ENCODE measurements at regions of chr4 and their contacts with region 1.

Region 1: DNA sequence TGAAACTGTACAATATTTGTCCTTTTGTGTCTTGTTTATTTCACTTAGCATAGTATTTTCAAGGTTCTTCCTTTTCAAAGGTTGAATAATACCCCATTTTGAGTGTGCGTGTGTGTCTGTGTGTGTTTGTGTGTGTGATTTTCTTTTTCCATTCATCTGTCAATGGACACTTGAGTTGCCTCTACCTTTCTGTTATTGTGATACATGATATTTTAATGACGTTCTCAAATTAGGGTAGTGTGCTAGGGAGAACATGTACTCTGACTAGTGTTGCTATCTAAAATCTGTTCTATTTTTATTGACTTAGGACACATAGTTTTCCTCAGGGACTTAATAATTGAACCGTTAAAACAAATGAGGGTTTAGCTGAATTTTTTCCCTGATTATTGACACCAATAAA is 9.9 kb downstream of the MMRN1 start:
- DNase-seq: no peak
- ATAC-seq: no peak
- H3K4me3 ChIP-seq: no peak overlapping the region
- H3K27ac ChIP-seq: no peak overlapping the region
- H3K4me1 ChIP-seq: no peaks in the 10 kb centered on the region
- H3K27me3 ChIP-seq: no peaks in the 10 kb centered on the region

Region 2: GRCh38 chr4:89226665-89227574 is 677.6 kb before region 1 on chr4:
- intact Hi-C with region 1: loop called (anchors 5 kb)
- DNase-seq: peak; percentile 78 to 84
- ATAC-seq: peak; percentile 82
- H3K4me3 ChIP-seq: no peak overlapping the region
- H3K27ac ChIP-seq: no peak overlapping the region
- H3K4me1 ChIP-seq: no peaks in the 10 kb centered on the region
- H3K27me3 ChIP-seq: no peaks in the 10 kb centered on the region

Region 3: DNA sequence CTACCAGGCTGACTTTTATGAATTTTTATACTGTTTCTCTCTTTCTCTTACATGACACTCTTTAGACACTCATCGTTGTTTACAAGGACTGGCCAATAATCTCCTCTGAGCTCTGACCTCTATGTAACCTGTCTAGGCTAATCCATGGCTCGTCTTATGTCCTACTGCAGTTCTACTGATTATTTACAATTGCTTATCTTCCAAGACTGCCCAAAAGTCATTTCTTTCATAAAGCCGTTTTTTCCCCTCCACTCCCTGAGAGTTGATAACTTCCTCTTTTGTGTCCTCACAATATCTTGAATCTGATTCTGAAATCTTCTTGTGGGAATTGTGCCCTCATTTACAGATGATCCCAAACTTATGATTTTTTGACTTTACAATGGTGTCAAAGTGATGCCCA is 49.3 kb before region 1 on chr4:
- intact Hi-C with region 1: no loop called
- DNase-seq: no peak
- ATAC-seq: no peak
- H3K4me3 ChIP-seq: no peak overlapping the region
- H3K27ac ChIP-seq: no peak overlapping the region
- H3K4me1 ChIP-seq: no peaks in the 10 kb centered on the region
- H3K27me3 ChIP-seq: no peaks in the 10 kb centered on the region

Region 4: DNA sequence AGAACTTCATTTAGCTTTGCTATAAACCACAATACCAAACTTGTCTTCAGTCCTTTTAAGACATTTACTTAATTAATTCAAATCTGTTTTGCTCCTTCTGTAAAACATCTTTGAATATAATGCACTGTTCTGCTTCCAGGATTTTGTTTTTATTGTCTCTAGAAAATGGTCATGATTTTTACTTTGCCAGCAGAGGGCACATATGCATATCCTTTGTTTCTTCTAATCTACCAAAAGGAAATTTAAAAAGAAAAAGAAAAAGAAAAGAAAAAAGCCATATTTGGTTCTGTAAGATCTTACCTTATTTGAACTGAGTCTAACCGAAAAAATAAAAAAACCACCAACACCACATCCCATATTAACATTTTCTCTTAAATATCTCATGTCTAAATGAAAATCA is 120.7 kb after region 1 on chr4:
- intact Hi-C with region 1: no loop called
- DNase-seq: no peak
- ATAC-seq: no peak
- H3K4me3 ChIP-seq: no peak overlapping the region
- H3K27ac ChIP-seq: no peak overlapping the region
- H3K4me1 ChIP-seq: no peaks in the 10 kb centered on the region
- H3K27me3 ChIP-seq: no peaks in the 10 kb centered on the region

Measured in aorta (tissue), 5 donors.